ENCODE measurements at regions of chr22 and their contacts with region 1.

Region 1: GRCh38 chr22:17628304-17629166 is at the start of gene ATP6V1E1:
- DNase-seq: peak; percentile 98 to 100
- H3K4me3 ChIP-seq: peak within 1 kb of the TSS; percentile 100
- CTCF ChIP-seq: no peak
- POLR2A ChIP-seq: peak in 1 of 2 donors; percentile 48
- total RNA-seq, gene ATP6V1E1: 113 to 136 (median 125) TPM

Region 2: DNA sequence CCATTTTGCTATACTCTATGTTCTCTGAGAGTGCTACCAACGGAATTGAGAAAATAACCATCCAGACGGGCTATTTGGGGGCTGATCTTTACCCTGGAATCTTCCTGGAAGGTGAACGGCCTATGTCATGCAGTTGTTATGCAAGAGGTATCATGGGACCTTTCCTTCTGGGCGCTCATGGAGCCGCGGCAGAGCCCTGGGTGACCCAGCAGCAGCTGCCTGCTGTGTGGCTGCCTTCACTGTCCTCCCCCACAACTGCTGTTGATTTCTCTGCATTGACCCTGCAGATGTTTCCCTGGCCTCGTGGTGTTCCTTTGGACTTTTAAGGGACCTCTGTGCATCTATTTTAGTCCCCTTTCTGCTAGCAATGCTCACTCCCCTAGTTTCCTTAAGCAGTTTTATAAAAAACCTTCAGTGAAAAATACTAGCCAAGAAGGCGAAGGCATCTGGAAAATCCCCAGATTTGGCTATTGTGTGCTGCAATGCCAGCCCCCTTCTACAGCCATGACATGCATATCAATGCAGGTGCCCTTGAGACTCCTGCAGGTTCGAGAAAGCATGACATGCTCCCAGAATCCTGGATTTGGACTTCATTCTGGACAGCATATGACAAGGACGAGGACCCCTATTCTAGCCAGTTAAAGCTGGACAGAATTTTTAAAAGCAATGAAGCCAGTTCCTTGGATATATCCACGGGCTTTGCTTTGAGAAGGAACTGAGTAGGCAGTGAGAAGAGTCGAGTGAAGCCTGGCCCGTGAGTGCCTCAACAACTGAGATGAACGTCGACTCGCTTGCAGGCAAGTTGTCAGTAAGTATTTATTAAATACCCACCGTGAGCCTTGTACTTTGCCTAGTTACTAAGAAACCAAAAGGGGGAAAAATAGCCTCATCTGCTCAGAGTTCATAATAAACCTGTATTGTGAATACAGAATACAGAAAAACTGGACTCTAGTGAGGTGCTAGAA is 65.3 kb before region 1 on chr22 and contains the start of gene SLC25A18:
- intact Hi-C with region 1: loop called (anchors 10 kb)
- DNase-seq: no peak
- H3K4me3 ChIP-seq: no peak within 1 kb of the TSS
- CTCF ChIP-seq: no peak
- POLR2A ChIP-seq: no peak
- total RNA-seq, gene SLC25A18: 0.83 to 2.3 (median 1.3) TPM